K562 (cell line): ENCODE measurements at regions of chr1 and their contacts with region 1.

Region 1: GRCh38 chr1:226332947-226333346 is 24.0 kb upstream of the LIN9 start:
- DNase-seq: no peak
- ATAC-seq: no peak
- H3K4me3 ChIP-seq: no peak overlapping the region
- H3K27ac ChIP-seq: no peak overlapping the region
- H3K4me1 ChIP-seq: no peaks in the 10 kb centered on the region; a peak in 2 of 5 replicates
- H3K27me3 ChIP-seq: no peaks in the 10 kb centered on the region
- CTCF ChIP-seq: no peak
- EP300 ChIP-seq: no peak
- POLR2A ChIP-seq: no peak
- RAD21 ChIP-seq: no peak

Region 2: DNA sequence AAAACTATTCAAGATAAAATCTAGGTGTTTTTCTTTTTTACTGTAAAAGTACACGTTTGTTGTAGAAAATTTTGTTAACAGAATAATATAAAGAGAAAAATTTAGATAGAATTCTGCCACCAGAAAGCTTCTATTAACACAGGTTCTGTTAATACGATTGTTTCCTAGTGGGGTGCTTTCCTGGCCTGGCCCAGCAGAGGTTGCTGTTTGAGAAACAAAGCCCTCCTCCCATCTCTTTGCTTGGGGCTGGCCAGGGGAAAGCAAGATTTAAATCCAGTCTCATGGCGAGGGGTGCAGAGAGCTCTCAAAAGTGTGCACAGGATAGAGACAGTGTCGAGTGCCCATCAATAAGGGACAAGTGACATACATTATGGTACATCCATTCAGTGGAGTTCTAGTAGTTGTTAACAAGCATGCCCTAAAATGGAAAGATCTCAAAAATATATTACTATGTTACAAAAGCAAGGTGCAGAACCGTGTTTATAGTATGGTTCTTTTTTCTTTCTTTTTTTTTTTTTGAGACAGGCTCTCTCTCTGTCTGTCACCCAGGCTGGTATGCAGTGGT is 131.8 kb before region 1 on chr1:
- CTCF ChIA-PET with region 1: no interaction called
- POLR2A ChIA-PET with region 1: no interaction called
- in situ Hi-C with region 1: no loop called
- intact Hi-C with region 1: loop called (anchors 1 kb)
- DNase-seq: peak in 3 of 4 experiments; percentile 41 to 66 (median 53)
- ATAC-seq: peak; percentile 80
- H3K4me3 ChIP-seq: no peak overlapping the region
- H3K27ac ChIP-seq: no peak overlapping the region
- H3K4me1 ChIP-seq: peaks cover 0 to 6% of the 10 kb centered on the region in 2 experiments; a peak in 1 of 5 replicates
- H3K27me3 ChIP-seq: no peaks in the 10 kb centered on the region
- CTCF ChIP-seq: peak; percentile 65 to 80 (median 71)
- EP300 ChIP-seq: no peak
- POLR2A ChIP-seq: no peak
- RAD21 ChIP-seq: peak; percentile 50 to 79

Region 3: DNA sequence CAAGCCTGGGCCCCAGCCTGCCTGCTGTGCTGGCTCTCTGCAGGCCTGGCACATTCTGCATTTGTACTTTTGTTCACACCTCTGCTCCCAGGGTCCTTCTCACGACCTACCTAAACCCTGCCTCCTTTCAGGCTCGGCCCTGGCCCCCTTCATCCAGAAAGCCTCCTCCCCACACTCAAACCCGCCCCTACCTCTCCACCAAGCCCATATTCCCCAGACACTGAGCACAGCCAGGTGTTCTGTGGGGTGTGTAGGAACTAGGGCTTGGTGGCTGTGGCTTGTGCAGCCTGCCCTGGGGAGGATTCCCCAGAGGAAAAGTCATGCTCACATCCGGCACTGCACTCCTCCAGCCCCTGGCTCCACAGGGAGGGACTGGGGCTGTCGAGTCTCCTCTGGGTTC is 117.7 kb before region 1 on chr1:
- CTCF ChIA-PET with region 1: no interaction called
- POLR2A ChIA-PET with region 1: no interaction called
- in situ Hi-C with region 1: no loop called
- intact Hi-C with region 1: loop called (anchors 5 kb)
- DNase-seq: no peak
- ATAC-seq: peak; percentile 49
- H3K4me3 ChIP-seq: no peak overlapping the region
- H3K27ac ChIP-seq: no peak overlapping the region
- H3K4me1 ChIP-seq: peaks cover 4 to 12% of the 10 kb centered on the region in 2 experiments
- H3K27me3 ChIP-seq: no peaks in the 10 kb centered on the region
- CTCF ChIP-seq: no peak
- EP300 ChIP-seq: no peak
- POLR2A ChIP-seq: no peak
- RAD21 ChIP-seq: no peak